BJ (cell line): ENCODE measurements at regions of chr6 and their contacts with region 1.

Region 1: GRCh38 chr6:112912416-112913101 is 565.4 kb downstream of the RFPL4B start:
- DNase-seq: peak; percentile 18
- H3K4me3 ChIP-seq: no peak overlapping the region
- H3K27me3 ChIP-seq: no peaks in the 10 kb centered on the region
- CTCF ChIP-seq: no peak

Region 2: GRCh38 chr6:112469286-112469685 is 443.3 kb before region 1 on chr6:
- CTCF ChIA-PET with region 1: no interaction called
- POLR2A ChIA-PET with region 1: interaction called, 10 read pairs
- DNase-seq: no peak
- H3K4me3 ChIP-seq: no peak overlapping the region
- H3K27me3 ChIP-seq: no peaks in the 10 kb centered on the region
- CTCF ChIP-seq: no peak